Heart left ventricle (tissue), 16 donors: ENCODE measurements at regions of chr6 and their contacts with region 1.

Region 1: DNA sequence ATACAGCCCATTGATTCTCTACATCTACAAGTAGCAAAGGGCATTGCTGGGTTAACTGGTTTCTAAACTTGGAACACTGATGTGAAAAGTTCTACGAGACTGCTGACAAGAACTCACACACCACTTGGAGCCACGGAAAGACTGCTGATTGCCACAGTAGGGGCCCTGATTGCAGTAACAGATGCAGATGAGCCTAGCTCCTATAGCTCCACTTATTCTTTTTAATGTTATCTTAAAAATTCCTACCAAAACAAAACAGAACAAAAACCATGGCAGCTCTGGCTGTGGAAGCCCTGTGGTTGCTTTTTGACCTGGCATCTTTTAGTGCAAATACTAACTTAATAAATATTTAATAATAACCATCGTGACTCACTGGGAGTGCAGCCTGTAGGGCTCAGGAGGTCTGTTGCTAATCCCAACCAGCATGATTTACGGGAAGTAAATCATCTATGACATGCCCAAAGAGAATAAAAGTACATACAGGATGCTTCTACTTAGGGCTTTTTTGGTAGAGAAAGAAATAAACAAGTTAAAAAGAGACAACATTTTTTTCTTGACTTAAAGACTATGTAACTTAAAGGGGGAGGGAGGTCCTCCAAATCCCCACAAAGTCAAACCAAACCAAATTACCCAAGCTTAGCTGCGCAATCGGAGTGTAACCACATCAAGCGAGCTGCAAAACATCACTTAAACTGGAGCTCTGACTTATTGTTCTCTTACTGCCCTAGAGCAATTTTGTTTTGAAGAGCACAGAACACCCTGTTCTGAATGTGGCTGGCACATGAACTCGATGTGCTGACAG is 87.2 kb downstream of the FKBP5 start:
- DNase-seq: peak in 4 of 5 donors; percentile 17 to 74 (median 43)
- ATAC-seq: peak; percentile 88 to 91 (median 90)
- H3K4me3 ChIP-seq: peak overlapping the region in 10 of 12 donors; percentile 5 to 46 (median 27)
- H3K27ac ChIP-seq: peak overlapping the region; percentile 84 to 100 (median 94)
- H3K4me1 ChIP-seq: peaks cover 29 to 100% (median 45%) of the 10 kb centered on the region in 12 donors
- H3K27me3 ChIP-seq: no peaks in the 10 kb centered on the region
- CTCF ChIP-seq: no peak
- POLR2A ChIP-seq: no peak

Region 2: GRCh38 chr6:35590622-35591066 is 10.9 kb before region 1 on chr6:
- intact Hi-C with region 1: loop called in 2 of 10 experiments (anchors 1 to 2 kb)
- DNase-seq: peak in 2 of 5 donors; percentile 52 to 59
- ATAC-seq: peak; percentile 66 to 86 (median 78)
- H3K4me3 ChIP-seq: no peak overlapping the region
- H3K27ac ChIP-seq: peak overlapping the region; percentile 6 to 92 (median 75)
- H3K4me1 ChIP-seq: peaks cover 21 to 94% (median 37%) of the 10 kb centered on the region in 12 donors
- H3K27me3 ChIP-seq: no peaks in the 10 kb centered on the region
- CTCF ChIP-seq: no peak
- POLR2A ChIP-seq: peak in 1 of 2 donors; percentile 39

Region 3: DNA sequence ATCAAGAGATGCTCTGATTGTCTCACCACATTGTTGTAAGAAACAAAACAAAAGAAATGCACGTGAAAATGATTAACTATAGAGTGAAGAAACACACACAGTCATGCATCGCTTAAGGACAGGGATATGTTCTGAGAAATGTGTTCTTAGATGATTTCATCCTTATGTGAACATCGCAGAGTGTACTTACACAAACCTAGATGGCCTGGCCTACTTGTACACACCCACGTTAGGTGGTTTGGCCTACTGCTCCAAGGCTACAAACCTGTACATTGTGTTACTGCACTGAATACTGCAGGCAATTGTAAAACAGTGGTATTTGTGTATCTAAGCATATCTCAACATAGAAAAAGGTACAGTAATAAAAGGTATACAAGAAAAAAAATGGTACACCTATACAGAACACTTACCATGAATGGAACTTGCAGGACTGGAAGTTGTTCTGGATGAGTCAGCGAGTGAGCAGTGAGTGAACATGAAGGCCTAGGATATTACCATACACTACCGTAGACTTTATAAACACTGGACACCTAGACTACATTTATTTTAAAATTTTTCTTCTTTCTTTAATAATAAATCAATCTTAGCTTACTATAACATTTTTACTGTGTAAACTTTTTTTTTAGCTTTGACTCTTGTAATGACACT is 38.6 kb after region 1 on chr6:
- intact Hi-C with region 1: no loop called
- DNase-seq: no peak
- ATAC-seq: no peak
- H3K4me3 ChIP-seq: no peak overlapping the region
- H3K27ac ChIP-seq: no peak overlapping the region
- H3K4me1 ChIP-seq: peaks cover 0 to 23% (median 0%) of the 10 kb centered on the region in 12 donors
- H3K27me3 ChIP-seq: no peaks in the 10 kb centered on the region
- CTCF ChIP-seq: no peak
- POLR2A ChIP-seq: no peak

Region 4: GRCh38 chr6:35688581-35689322 is 87.2 kb after region 1 on chr6 and contains the start of gene FKBP5:
- intact Hi-C with region 1: loop called in 5 of 10 experiments (anchors 5 to 10 kb)
- DNase-seq: peak; percentile 97 to 98 (median 98)
- ATAC-seq: peak; percentile 85 to 96 (median 94)
- H3K4me3 ChIP-seq: peak within 1 kb of the TSS; percentile 83 to 100 (median 91)
- H3K27ac ChIP-seq: peak within 1 kb of the TSS; percentile 85 to 99 (median 94)
- H3K4me1 ChIP-seq: peaks cover 0 to 67% (median 22%) of the 10 kb centered on the region in 12 donors
- H3K27me3 ChIP-seq: no peaks in the 10 kb centered on the region
- CTCF ChIP-seq: no peak
- POLR2A ChIP-seq: peak; percentile 99
- total RNA-seq, gene FKBP5: 19.7 to 175 (median 104) TPM